ENCODE measurements at regions of chr13 and their contacts with region 1.

Region 1: GRCh38 chr13:41054212-41054877 is 7.0 kb upstream of the WBP4 start:
- DNase-seq: peak in 4 of 7 donors; percentile 30 to 58 (median 45)
- H3K4me3 ChIP-seq: peak overlapping the region in 1 of 4 donors; percentile 22
- H3K27ac ChIP-seq: peak overlapping the region in 3 of 5 donors; percentile 4 to 64 (median 30)
- H3K4me1 ChIP-seq: peaks cover 48 to 88% of the 10 kb centered on the region in 2 donors
- H3K27me3 ChIP-seq: no peaks in the 10 kb centered on the region
- CTCF ChIP-seq: peak; percentile 36 to 63 (median 54)
- POLR2A ChIP-seq: no peak

Region 2: GRCh38 chr13:40874138-40874779 is 180.1 kb before region 1 on chr13:
- intact Hi-C with region 1: no loop called
- DNase-seq: no peak
- H3K4me3 ChIP-seq: no peak overlapping the region
- H3K27ac ChIP-seq: no peak overlapping the region
- H3K4me1 ChIP-seq: no peaks in the 10 kb centered on the region
- H3K27me3 ChIP-seq: no peaks in the 10 kb centered on the region
- CTCF ChIP-seq: no peak
- POLR2A ChIP-seq: no peak

Region 3: GRCh38 chr13:40974460-40975407 is 79.6 kb before region 1 on chr13:
- intact Hi-C with region 1: loop called in 1 of 2 experiments (anchors 10 kb)
- DNase-seq: peak in 5 of 7 donors; percentile 30 to 67 (median 50)
- H3K4me3 ChIP-seq: no peak overlapping the region
- H3K27ac ChIP-seq: no peak overlapping the region
- H3K4me1 ChIP-seq: peaks cover 8 to 58% of the 10 kb centered on the region in 2 donors
- H3K27me3 ChIP-seq: no peaks in the 10 kb centered on the region
- CTCF ChIP-seq: peak; percentile 29 to 61 (median 50)
- POLR2A ChIP-seq: no peak

Region 4: GRCh38 chr13:41004875-41005693 is 49.3 kb before region 1 on chr13:
- intact Hi-C with region 1: no loop called
- DNase-seq: no peak
- H3K4me3 ChIP-seq: no peak overlapping the region
- H3K27ac ChIP-seq: no peak overlapping the region
- H3K4me1 ChIP-seq: peaks cover 0 to 37% of the 10 kb centered on the region in 2 donors
- H3K27me3 ChIP-seq: no peaks in the 10 kb centered on the region
- CTCF ChIP-seq: no peak
- POLR2A ChIP-seq: no peak

Region 5: DNA sequence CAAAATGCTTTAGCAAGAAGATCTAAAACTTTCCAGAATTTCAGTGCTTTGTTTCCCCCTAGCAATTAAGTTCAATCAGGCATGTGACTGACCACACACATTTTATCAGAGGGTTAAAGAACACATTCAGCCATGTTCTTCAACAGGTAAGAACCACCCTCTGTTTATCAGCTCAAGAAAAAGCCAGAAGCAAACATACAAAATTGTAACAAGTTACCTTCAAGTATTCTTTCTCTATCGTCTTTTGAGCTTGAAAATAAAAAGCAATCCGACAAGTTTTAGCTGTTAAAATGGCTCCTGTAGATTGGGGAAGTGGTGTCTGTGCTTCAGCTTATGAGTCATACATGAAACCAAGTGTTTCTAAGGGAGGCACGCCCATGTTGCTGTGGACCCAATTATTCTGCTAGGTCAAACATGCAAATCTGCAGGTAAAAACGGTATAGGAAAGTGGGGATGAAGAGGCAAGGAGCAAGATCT is 35.3 kb before region 1 on chr13 and contains the start of gene ELF1:
- intact Hi-C with region 1: loop called in 1 of 2 experiments (anchors 5 kb)
- DNase-seq: peak in 6 of 7 donors; percentile 25 to 73 (median 40)
- H3K4me3 ChIP-seq: peak within 1 kb of the TSS in 1 of 4 donors; percentile 20
- H3K27ac ChIP-seq: peak within 1 kb of the TSS in 4 of 5 donors; percentile 32 to 73 (median 56)
- H3K4me1 ChIP-seq: peaks cover 9 to 37% of the 10 kb centered on the region in 2 donors
- H3K27me3 ChIP-seq: no peaks in the 10 kb centered on the region
- CTCF ChIP-seq: no peak
- POLR2A ChIP-seq: no peak
- total RNA-seq, gene ELF1: 27.6 to 64.3 (median 52.0) TPM

Measured in adrenal gland (tissue), 19 donors.